PC-3 (cell line): ENCODE measurements at regions of chr7 and their contacts with region 1.

Region 1: GRCh38 chr7:33591490-33592065 is 313.8 kb upstream of the BMPER start:
- DNase-seq: peak; percentile 45
- ATAC-seq: peak; percentile 66
- H3K4me3 ChIP-seq: peak overlapping the region; percentile 5; the same call in 1 of the 2 replicates
- H3K27ac ChIP-seq: peak overlapping the region; percentile 93
- H3K4me1 ChIP-seq: peaks cover 30% of the 10 kb centered on the region
- H3K27me3 ChIP-seq: no peaks in the 10 kb centered on the region
- CTCF ChIP-seq: no peak

Region 2: DNA sequence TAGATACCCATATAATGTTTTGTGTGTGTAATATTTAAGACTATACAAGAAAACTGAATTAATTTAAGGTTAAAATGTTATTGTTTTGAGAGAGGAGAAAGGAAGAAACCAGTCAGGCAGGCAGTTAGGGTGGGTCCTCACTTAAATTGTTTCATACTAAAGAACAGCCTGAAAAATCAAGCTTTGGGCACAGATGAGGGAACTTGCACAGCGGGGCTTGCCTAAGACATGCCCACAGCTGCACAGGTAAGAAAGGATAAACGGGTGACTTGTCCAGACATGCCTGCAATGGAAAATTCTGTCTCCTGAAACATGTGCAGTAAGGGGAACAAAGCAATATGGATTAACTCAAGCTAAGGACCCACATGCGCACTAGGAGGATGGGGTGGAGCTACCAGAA is 303.8 kb before region 1 on chr7:
- CTCF ChIA-PET with region 1: no interaction called
- POLR2A ChIA-PET with region 1: no interaction called
- intact Hi-C with region 1: no loop called
- DNase-seq: no peak
- ATAC-seq: no peak
- H3K4me3 ChIP-seq: no peak overlapping the region
- H3K27ac ChIP-seq: no peak overlapping the region
- H3K4me1 ChIP-seq: no peaks in the 10 kb centered on the region
- H3K27me3 ChIP-seq: no peaks in the 10 kb centered on the region
- CTCF ChIP-seq: no peak

Region 3: GRCh38 chr7:33494474-33494873 is 97.1 kb before region 1 on chr7:
- CTCF ChIA-PET with region 1: no interaction called
- POLR2A ChIA-PET with region 1: no interaction called
- intact Hi-C with region 1: loop called (anchors 1 kb)
- DNase-seq: peak; percentile 70
- ATAC-seq: peak; percentile 94
- H3K4me3 ChIP-seq: no peak overlapping the region
- H3K27ac ChIP-seq: peak overlapping the region; percentile 51
- H3K4me1 ChIP-seq: peaks cover 18% of the 10 kb centered on the region
- H3K27me3 ChIP-seq: no peaks in the 10 kb centered on the region
- CTCF ChIP-seq: no peak

Region 4: DNA sequence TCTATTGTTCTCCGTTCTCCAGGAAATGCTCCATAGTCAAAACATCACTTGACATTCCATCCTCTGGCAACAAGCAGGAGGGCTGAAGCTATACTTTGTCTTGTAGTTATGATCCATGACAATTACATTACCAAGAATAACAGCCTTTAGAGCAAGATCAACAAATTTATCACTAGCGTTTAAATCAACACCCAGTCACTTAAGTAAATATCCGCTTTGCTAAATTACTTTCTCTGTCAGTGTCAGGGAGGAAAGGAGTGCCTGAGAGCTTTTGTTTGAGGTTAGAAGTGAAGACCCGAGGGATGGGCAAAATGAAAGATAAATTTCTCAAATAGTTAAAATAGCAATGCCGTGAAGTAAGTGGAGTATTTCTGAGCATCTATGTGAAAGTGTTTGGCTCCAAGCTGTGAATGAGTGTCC is 77.7 kb after region 1 on chr7:
- CTCF ChIA-PET with region 1: no interaction called
- POLR2A ChIA-PET with region 1: no interaction called
- intact Hi-C with region 1: loop called (anchors 1 kb)
- DNase-seq: peak; percentile 77
- ATAC-seq: peak; percentile 90
- H3K4me3 ChIP-seq: peak overlapping the region; percentile 3; the same call in 1 of the 2 replicates
- H3K27ac ChIP-seq: peak overlapping the region; percentile 64
- H3K4me1 ChIP-seq: peaks cover 24% of the 10 kb centered on the region
- H3K27me3 ChIP-seq: no peaks in the 10 kb centered on the region
- CTCF ChIP-seq: no peak

Region 5: DNA sequence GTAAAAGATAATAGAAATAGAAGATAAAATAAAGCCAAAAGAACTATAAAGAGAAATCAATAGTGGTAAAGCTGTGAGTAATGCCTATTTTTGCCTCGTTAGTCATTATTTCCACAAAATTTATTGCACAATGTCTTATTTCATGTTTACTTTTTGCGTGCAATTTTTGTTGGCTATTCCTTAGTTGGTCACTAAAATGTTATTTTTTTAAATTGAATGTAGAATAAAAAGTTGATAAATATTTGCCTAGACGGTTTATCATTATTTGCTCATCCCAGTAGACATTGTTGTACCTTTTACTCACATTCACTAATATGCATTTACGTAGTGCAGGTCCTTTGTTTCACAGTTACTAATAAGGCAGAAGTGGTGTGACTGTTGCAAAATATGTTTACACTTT is 86.0 kb after region 1 on chr7:
- CTCF ChIA-PET with region 1: no interaction called
- POLR2A ChIA-PET with region 1: no interaction called
- intact Hi-C with region 1: loop called (anchors 1 kb)
- DNase-seq: peak; percentile 94
- ATAC-seq: peak; percentile 91
- H3K4me3 ChIP-seq: no peak overlapping the region
- H3K27ac ChIP-seq: peak overlapping the region; percentile 86
- H3K4me1 ChIP-seq: peaks cover 28% of the 10 kb centered on the region
- H3K27me3 ChIP-seq: no peaks in the 10 kb centered on the region
- CTCF ChIP-seq: no peak

Region 6: DNA sequence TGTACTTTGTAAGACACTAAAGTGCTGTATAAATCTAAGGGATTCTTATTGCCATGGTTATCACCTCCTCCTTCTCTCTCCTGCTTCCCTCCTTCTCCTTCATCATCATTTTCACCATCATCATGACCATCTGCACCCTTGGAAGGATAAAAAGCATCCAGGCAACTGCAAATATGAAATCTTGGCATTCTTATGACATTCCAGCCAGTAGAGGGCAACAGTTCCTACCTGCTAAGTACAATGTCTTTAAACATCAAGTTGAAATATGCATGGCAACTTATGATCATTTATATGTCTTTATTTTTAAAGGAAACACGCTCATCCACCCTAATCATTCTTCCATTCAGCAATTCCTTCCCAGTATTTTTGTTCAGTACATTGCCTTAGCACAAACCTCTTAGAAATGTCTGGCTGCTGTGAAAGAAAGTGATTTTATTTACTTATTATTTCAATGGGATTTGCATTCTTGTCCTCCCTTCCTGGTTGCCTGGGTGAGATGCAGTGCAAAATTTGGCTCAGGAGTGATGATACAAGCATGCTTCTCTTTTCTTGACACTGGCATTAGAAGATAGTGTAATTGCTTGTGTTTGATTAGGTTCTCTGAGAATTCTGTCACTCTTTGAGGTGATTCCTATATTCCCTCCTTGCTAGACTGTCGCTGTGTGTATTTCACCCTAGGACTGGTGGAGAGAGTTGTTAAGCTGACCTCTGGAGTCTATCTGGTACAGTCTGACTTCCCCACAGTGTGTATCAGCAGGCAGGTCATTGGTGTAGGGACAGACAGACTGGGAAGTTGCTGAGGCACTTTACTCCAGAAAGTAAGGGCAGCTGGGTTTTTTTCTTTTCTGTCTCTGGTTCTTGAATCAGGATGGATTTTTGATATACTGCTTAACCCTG is 125.3 kb after region 1 on chr7:
- CTCF ChIA-PET with region 1: no interaction called
- POLR2A ChIA-PET with region 1: no interaction called
- intact Hi-C with region 1: loop called (anchors 2 kb)
- DNase-seq: peak; percentile 78
- ATAC-seq: peak; percentile 58
- H3K4me3 ChIP-seq: no peak overlapping the region
- H3K27ac ChIP-seq: no peak overlapping the region
- H3K4me1 ChIP-seq: peaks cover under 1% of the 10 kb centered on the region; the same call in 1 of the 2 replicates
- H3K27me3 ChIP-seq: no peaks in the 10 kb centered on the region
- CTCF ChIP-seq: peak; percentile 85